CD8-positive, alpha-beta T cell (primary cell): ENCODE measurements at regions of chr12 and their contacts with region 1.

Region 1: GRCh38 chr12:94149119-94149780 is 873 bp downstream of the PLXNC1 start:
- DNase-seq: peak; percentile 10 to 70 (median 40)
- ATAC-seq: peak; percentile 17
- H3K4me3 ChIP-seq: peak overlapping the region; percentile 57 to 61
- H3K4me3 Mint-ChIP-seq: peak overlapping the region; percentile 90
- H3K27ac ChIP-seq: no peak overlapping the region
- H3K27ac Mint-ChIP-seq: no peak overlapping the region
- H3K4me1 ChIP-seq: peaks cover 17% of the 10 kb centered on the region
- H3K4me1 Mint-ChIP-seq: peaks cover 41% of the 10 kb centered on the region
- H3K27me3 ChIP-seq: no peaks in the 10 kb centered on the region
- H3K27me3 Mint-ChIP-seq: no peaks in the 10 kb centered on the region
- CTCF ChIP-seq: peak; percentile 33

Region 2: GRCh38 chr12:94207849-94208621 is 58.8 kb after region 1 on chr12:
- CTCF ChIA-PET with region 1: interaction called, 6 read pairs
- POLR2A ChIA-PET with region 1: interaction called, 3 read pairs
- intact Hi-C with region 1: loop called (anchors 2 to 5 kb)
- DNase-seq: peak in 6 of 9 experiments; percentile 11 to 73 (median 42)
- ATAC-seq: peak; percentile 83
- H3K4me3 ChIP-seq: peak overlapping the region; percentile 36
- H3K4me3 Mint-ChIP-seq: peak overlapping the region; percentile 79
- H3K27ac ChIP-seq: peak overlapping the region; percentile 48 to 82
- H3K27ac Mint-ChIP-seq: peak overlapping the region; percentile 94
- H3K4me1 ChIP-seq: peaks cover 50% of the 10 kb centered on the region
- H3K4me1 Mint-ChIP-seq: peaks cover 56% of the 10 kb centered on the region
- H3K27me3 ChIP-seq: no peaks in the 10 kb centered on the region
- H3K27me3 Mint-ChIP-seq: no peaks in the 10 kb centered on the region
- CTCF ChIP-seq: no peak

Region 3: DNA sequence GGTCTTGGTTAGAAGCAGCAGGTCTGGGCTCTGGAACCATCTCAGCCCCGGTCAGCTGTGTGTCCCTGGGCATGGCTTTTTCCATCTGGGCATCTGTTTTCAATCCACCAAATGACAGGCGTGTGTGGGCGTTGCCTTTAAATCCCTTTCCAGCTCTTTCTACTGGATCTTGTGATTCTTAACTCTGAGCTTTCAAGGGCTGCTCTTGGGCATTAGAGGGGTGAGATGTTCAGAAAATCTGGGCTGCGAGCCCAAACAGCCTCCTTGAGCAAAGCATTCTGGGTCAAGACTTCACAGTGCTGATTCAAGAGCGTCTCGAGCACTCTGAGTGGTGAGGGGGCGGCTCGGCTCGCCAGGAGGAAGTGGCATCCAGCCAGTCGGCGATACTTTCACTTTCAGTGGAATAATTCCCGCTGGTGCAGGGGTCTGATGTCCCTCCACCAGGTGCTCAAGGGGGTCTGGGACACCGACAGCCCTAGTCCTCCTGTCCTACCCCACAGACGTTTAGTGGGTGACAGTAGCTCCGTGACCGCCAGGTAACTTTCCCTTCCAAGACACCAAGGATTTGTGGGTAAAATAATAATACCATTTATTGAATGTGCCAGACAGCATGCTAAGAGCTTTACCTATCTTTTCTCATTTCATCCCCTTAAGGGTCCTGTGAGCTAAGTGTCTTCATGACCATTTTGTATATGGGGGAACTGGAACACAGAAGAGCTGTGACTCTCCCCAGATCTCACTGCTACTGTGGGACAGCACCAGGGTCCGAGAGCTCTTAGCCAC is 113.2 kb after region 1 on chr12:
- CTCF ChIA-PET with region 1: no interaction called
- POLR2A ChIA-PET with region 1: interaction called, 10 read pairs
- intact Hi-C with region 1: loop called (anchors 1 to 5 kb)
- DNase-seq: peak; percentile 45 to 90 (median 79)
- ATAC-seq: peak; percentile 91
- H3K4me3 ChIP-seq: peak overlapping the region; percentile 63 to 68
- H3K4me3 Mint-ChIP-seq: peak overlapping the region; percentile 99
- H3K27ac ChIP-seq: peak overlapping the region; percentile 74 to 92
- H3K27ac Mint-ChIP-seq: peak overlapping the region; percentile 99
- H3K4me1 ChIP-seq: peaks cover 21% of the 10 kb centered on the region
- H3K4me1 Mint-ChIP-seq: peaks cover 44% of the 10 kb centered on the region
- H3K27me3 ChIP-seq: no peaks in the 10 kb centered on the region
- H3K27me3 Mint-ChIP-seq: no peaks in the 10 kb centered on the region
- CTCF ChIP-seq: no peak

Region 4: GRCh38 chr12:94289461-94290312 is 140.4 kb after region 1 on chr12:
- CTCF ChIA-PET with region 1: interaction called, 5 read pairs
- POLR2A ChIA-PET with region 1: no interaction called
- intact Hi-C with region 1: loop called in 1 of 2 experiments (anchors 1 kb)
- DNase-seq: no peak
- ATAC-seq: no peak
- H3K4me3 ChIP-seq: no peak overlapping the region
- H3K4me3 Mint-ChIP-seq: no peak overlapping the region
- H3K27ac ChIP-seq: no peak overlapping the region
- H3K27ac Mint-ChIP-seq: peak overlapping the region; percentile 41
- H3K4me1 ChIP-seq: no peaks in the 10 kb centered on the region
- H3K4me1 Mint-ChIP-seq: peaks cover 2% of the 10 kb centered on the region
- H3K27me3 ChIP-seq: no peaks in the 10 kb centered on the region
- H3K27me3 Mint-ChIP-seq: no peaks in the 10 kb centered on the region
- CTCF ChIP-seq: no peak

Region 5: GRCh38 chr12:94435511-94435927 is 286.3 kb after region 1 on chr12:
- CTCF ChIA-PET with region 1: interaction called, 4 read pairs
- POLR2A ChIA-PET with region 1: no interaction called
- intact Hi-C with region 1: loop called in 1 of 2 experiments (anchors 5 kb)
- DNase-seq: no peak
- ATAC-seq: no peak
- H3K4me3 ChIP-seq: no peak overlapping the region
- H3K4me3 Mint-ChIP-seq: no peak overlapping the region
- H3K27ac ChIP-seq: no peak overlapping the region
- H3K27ac Mint-ChIP-seq: no peak overlapping the region
- H3K4me1 ChIP-seq: peaks cover 9% of the 10 kb centered on the region
- H3K4me1 Mint-ChIP-seq: peaks cover 18% of the 10 kb centered on the region
- H3K27me3 ChIP-seq: no peaks in the 10 kb centered on the region
- H3K27me3 Mint-ChIP-seq: no peaks in the 10 kb centered on the region
- CTCF ChIP-seq: no peak

Region 6: GRCh38 chr12:94459728-94460615 is 310.7 kb after region 1 on chr12 and contains the start of gene CEP83:
- CTCF ChIA-PET with region 1: interaction called, 3 read pairs
- POLR2A ChIA-PET with region 1: interaction called, 3 read pairs
- intact Hi-C with region 1: loop called (anchors 2 kb)
- DNase-seq: peak; percentile 90 to 98 (median 97)
- ATAC-seq: peak; percentile 96
- H3K4me3 ChIP-seq: peak within 1 kb of the TSS; percentile 94 to 96
- H3K4me3 Mint-ChIP-seq: peak within 1 kb of the TSS; percentile 96
- H3K27ac ChIP-seq: peak within 1 kb of the TSS; percentile 91 to 93
- H3K27ac Mint-ChIP-seq: peak within 1 kb of the TSS; percentile 94
- H3K4me1 ChIP-seq: peaks cover 6% of the 10 kb centered on the region
- H3K4me1 Mint-ChIP-seq: peaks cover 33% of the 10 kb centered on the region
- H3K27me3 ChIP-seq: peaks cover 0 to 2% of the 10 kb centered on the region in 2 experiments
- H3K27me3 Mint-ChIP-seq: peaks cover 5% of the 10 kb centered on the region
- CTCF ChIP-seq: no peak
- total RNA-seq, gene CEP83: 9.7 to 11.2 TPM

Region 7: GRCh38 chr12:94532490-94533422 is 383.5 kb after region 1 on chr12:
- CTCF ChIA-PET with region 1: interaction called, 10 read pairs
- POLR2A ChIA-PET with region 1: no interaction called
- intact Hi-C with region 1: loop called in 1 of 2 experiments (anchors 1 kb)
- DNase-seq: peak; percentile 47 to 79 (median 70)
- ATAC-seq: peak; percentile 79
- H3K4me3 ChIP-seq: no peak overlapping the region
- H3K4me3 Mint-ChIP-seq: no peak overlapping the region
- H3K27ac ChIP-seq: no peak overlapping the region
- H3K27ac Mint-ChIP-seq: no peak overlapping the region
- H3K4me1 ChIP-seq: no peaks in the 10 kb centered on the region
- H3K4me1 Mint-ChIP-seq: no peaks in the 10 kb centered on the region
- H3K27me3 ChIP-seq: no peaks in the 10 kb centered on the region
- H3K27me3 Mint-ChIP-seq: peaks cover 10% of the 10 kb centered on the region
- CTCF ChIP-seq: peak; percentile 75